ENCODE measurements at regions of chr9 and their contacts with region 1.

Region 1: GRCh38 chr9:95010431-95010838 is 283.9 kb downstream of the AOPEP start:
- DNase-seq: no peak
- ATAC-seq: no peak

Region 2: DNA sequence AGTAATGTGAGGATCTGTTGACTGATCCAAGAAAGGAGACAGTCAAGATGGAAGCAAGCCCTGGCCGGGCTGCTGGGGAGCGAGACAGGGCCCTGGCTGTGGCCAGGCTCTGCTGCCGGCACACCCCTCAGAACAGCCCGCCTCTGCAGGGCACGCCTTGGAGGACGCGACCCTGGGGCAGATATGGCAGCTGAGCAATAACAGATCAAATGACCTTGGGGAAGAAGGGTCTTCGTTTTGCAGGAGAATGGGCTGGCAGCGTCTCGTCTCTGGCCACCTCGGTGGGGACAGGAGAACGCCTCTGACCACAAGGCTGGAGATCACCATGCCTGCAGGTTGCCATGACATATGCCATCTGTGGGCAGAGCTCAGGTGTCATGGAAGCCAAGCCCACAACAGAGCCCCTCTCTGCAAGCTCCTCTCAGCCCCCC is 100.6 kb after region 1 on chr9:
- intact Hi-C with region 1: loop called (anchors 5 kb)
- DNase-seq: no peak
- ATAC-seq: no peak

Measured in Right ventricle myocardium inferior (tissue), 1 donor.